ENCODE measurements at regions of chr6 and their contacts with region 1.

Region 1: GRCh38 chr6:30006170-30007131 is 54.6 kb upstream of the POLR1H start:
- DNase-seq: peak; percentile 30 to 45 (median 36)
- ATAC-seq: peak; percentile 73
- H3K4me3 ChIP-seq: peak overlapping the region; percentile 50 to 60
- H3K27ac ChIP-seq: peak overlapping the region in 2 of 4 donors; percentile 39 to 41
- H3K4me1 ChIP-seq: peaks cover 12% of the 10 kb centered on the region
- H3K27me3 ChIP-seq: no peaks in the 10 kb centered on the region
- CTCF ChIP-seq: no peak
- POLR2A ChIP-seq: no peak

Region 2: DNA sequence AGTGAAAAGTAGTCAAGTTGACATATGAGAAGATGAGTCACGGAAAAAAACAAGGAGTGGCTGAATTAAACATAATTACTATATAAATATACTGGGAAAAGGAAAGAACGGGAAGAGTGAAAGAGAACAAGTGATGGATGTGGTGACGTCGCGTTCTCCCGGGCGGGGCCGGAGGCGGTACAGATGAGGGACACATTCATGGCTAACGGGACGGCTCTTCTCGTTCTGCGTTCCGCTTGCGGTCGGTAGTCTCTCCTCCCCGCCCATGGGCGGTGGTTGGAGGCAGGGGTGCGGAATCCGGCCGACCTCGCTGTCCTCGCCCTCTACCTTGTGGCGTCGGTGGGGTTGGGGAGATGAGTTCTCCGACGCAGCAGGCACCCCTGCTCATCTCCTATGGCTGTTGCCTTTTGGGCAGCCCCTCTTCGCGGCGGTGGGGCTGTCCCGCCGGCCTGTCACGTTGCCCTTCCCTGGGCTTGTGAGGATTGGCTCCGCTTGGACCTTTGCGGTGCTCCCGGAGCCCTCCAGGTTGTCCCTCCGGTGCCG is 156.4 kb before region 1 on chr6:
- intact Hi-C with region 1: loop called (anchors 5 kb)
- DNase-seq: peak in 1 of 4 donors; percentile 23
- ATAC-seq: no peak
- H3K4me3 ChIP-seq: no peak overlapping the region
- H3K27ac ChIP-seq: no peak overlapping the region
- H3K4me1 ChIP-seq: no peaks in the 10 kb centered on the region
- H3K27me3 ChIP-seq: no peaks in the 10 kb centered on the region
- CTCF ChIP-seq: no peak
- POLR2A ChIP-seq: no peak